PC-3 (cell line): ENCODE measurements at regions of chrX and their contacts with region 1.

Region 1: DNA sequence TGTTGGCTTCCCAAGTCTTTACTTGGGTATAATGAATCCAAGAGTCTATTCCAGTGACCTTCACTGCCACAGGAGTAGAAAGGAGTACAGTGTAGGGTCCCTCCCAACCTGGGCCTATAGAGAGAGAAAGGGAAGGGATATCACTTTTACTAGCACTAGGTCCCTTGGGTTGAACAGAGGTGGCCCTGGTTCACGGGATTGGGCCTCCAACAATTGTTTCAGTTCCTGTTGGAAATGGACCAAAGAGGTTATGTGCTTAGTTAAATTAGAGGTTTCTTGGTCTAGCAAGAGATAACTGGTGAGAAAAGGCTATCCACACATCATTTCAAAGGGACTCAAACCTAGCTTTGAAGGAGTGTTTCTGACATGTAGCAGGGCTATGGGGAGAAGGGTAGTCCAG is 57.1 kb upstream of the MED14 start:
- DNase-seq: no peak
- ATAC-seq: no peak
- H3K4me3 ChIP-seq: no peak overlapping the region
- H3K27ac ChIP-seq: no peak overlapping the region
- H3K4me1 ChIP-seq: peaks cover 10% of the 10 kb centered on the region
- H3K27me3 ChIP-seq: no peaks in the 10 kb centered on the region
- CTCF ChIP-seq: no peak

Region 2: GRCh38 chrX:40651620-40652223 is 140.7 kb before region 1 on chrX:
- CTCF ChIA-PET with region 1: interaction called, 27 read pairs
- POLR2A ChIA-PET with region 1: no interaction called
- intact Hi-C with region 1: loop called (anchors 1 kb)
- DNase-seq: peak; percentile 69
- ATAC-seq: no peak
- H3K4me3 ChIP-seq: no peak overlapping the region
- H3K27ac ChIP-seq: no peak overlapping the region
- H3K4me1 ChIP-seq: no peaks in the 10 kb centered on the region
- H3K27me3 ChIP-seq: no peaks in the 10 kb centered on the region
- CTCF ChIP-seq: peak; percentile 82

Region 3: DNA sequence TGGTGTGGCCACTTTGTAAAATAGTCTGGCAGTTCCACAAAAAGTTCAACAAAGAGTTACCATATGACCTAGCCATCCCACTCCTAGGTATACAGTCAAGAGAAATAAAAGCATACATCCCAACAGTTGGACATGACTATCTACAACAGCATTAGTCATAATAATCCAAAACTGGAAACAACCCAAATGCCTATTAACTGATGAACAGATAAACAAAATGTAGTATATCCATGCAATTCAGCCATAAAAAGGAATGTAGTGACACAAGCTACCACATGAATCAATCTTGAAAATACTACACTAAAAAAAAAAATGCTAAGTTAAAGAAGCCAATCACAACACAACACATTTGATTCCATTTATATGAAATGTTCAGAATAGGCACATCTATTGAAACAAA is 73.2 kb before region 1 on chrX:
- CTCF ChIA-PET with region 1: no interaction called
- POLR2A ChIA-PET with region 1: no interaction called
- intact Hi-C with region 1: loop called (anchors 5 kb)
- DNase-seq: peak; percentile 90
- ATAC-seq: peak; percentile 81
- H3K4me3 ChIP-seq: peak overlapping the region; percentile 19; the same call in 1 of the 2 replicates
- H3K27ac ChIP-seq: peak overlapping the region; percentile 84
- H3K4me1 ChIP-seq: peaks cover 27% of the 10 kb centered on the region
- H3K27me3 ChIP-seq: no peaks in the 10 kb centered on the region
- CTCF ChIP-seq: no peak